A549 (cell line): ENCODE measurements at regions of chr12 and their contacts with region 1.

Region 1: DNA sequence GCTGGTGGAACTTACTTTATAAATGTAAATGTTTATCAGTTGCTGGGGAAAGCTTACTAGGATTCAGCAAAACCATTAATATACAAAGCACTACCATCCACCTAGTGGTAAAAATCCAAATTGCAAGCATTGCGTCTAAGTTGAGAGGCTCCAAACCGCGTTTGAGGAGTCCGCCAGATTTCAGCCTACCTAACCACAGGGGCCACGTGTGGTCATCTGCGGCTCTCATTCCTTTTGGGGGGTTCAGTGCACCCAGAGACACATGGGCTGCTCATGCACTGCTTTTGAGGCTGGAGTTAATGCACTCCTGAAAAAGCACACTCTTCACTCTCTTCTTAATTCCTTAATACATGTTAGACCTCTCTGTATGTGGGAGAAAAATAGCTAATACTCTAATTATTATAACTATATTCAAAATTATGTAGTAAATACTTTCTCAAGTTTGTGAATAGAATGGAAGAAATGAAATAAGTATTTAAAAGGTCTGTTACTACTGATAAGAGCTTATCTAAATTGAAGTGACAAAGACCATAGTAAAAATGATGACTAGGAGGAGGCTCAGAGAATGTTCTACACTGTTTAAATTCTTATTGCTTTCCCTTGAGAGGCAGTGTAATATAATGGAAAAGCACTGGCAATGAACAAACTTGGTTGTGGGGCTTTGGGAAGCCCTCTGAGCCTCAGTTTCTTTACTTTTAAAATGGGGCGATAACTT is 41.4 kb upstream of the MANSC4 start:
- DNase-seq: peak; percentile 79 to 80
- ATAC-seq: peak; percentile 76 to 92
- H3K4me3 ChIP-seq: no peak overlapping the region
- H3K27ac ChIP-seq: no peak overlapping the region
- H3K4me1 ChIP-seq: 0 out of 3 replicates have a peak, but pooled peaks cover 5% of the 10 kb centered on the region
- CTCF ChIP-seq: peak; percentile 68
- EP300 ChIP-seq: no peak
- POLR2A ChIP-seq: no peak
- RAD21 ChIP-seq: peak; percentile 67

Region 2: DNA sequence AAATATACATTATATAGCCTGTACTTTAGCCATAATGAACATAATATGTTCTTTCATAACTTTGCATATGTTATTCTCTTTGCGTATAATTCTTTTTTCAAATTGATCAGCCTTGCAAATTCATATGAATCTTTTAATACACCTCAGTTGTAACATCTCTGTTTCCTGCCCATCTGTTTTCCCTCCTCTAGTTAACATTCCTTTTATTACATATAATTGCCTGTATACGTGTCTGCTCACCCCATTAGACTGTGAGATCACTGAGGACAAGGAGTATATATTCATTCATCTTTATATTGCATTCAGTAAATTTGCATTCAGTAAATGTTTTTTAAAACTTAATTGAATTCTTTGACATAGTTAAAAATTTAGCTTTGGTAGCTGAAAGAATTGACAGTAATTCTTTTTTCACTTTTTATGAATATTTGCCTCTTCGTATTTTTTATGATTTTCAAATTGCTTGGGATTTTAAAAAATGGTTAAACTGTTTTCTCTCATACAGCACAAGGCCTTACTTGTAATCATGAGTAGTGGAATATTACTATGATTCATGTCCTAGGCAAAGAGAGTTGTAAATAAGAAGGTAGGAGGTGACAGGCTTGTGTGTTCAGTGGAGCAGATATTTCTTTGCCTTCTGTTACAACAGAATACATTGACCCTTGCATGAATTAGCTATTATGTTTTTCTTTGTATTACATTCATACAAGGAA is 74.2 kb before region 1 on chr12:
- CTCF ChIA-PET with region 1: interaction called, 22 read pairs
- POLR2A ChIA-PET with region 1: no interaction called
- DNase-seq: peak; percentile 31 to 53
- ATAC-seq: peak; percentile 76 to 90
- H3K4me3 ChIP-seq: no peak overlapping the region
- H3K27ac ChIP-seq: peak overlapping the region; percentile 81 to 82
- H3K4me1 ChIP-seq: peaks cover 56% of the 10 kb centered on the region
- CTCF ChIP-seq: no peak
- EP300 ChIP-seq: no peak
- POLR2A ChIP-seq: no peak
- RAD21 ChIP-seq: no peak

Region 3: GRCh38 chr12:27779920-27780611 is 41.4 kb before region 1 on chr12 and contains the starts of genes KLHL42 and MANSC4:
- CTCF ChIA-PET with region 1: interaction called, 3 read pairs
- POLR2A ChIA-PET with region 1: interaction called, 15 read pairs
- DNase-seq: peak; percentile 43 to 75
- ATAC-seq: peak; percentile 87 to 90
- H3K4me3 ChIP-seq: peak within 1 kb of the TSS; percentile 66
- H3K27ac ChIP-seq: peak within 1 kb of the TSS; percentile 92 to 97
- H3K4me1 ChIP-seq: peaks cover 25% of the 10 kb centered on the region
- CTCF ChIP-seq: 0 out of 3 replicates have a peak, but pooled peaks have one; percentile 7
- EP300 ChIP-seq: no peak
- POLR2A ChIP-seq: peak; percentile 55
- RAD21 ChIP-seq: no peak
- polyA plus RNA-seq, gene KLHL42: 24.0 and 29.1 TPM in 2 replicates
- polyA plus RNA-seq, gene MANSC4: 0.09 and 0.21 TPM in 2 replicates

Region 4: GRCh38 chr12:27794818-27795584 is 26.4 kb before region 1 on chr12:
- CTCF ChIA-PET with region 1: interaction called, 31 read pairs
- POLR2A ChIA-PET with region 1: no interaction called
- DNase-seq: no peak
- ATAC-seq: no peak
- H3K4me3 ChIP-seq: no peak overlapping the region
- H3K27ac ChIP-seq: no peak overlapping the region
- H3K4me1 ChIP-seq: no peaks in the 10 kb centered on the region
- CTCF ChIP-seq: no peak
- EP300 ChIP-seq: no peak
- POLR2A ChIP-seq: no peak
- RAD21 ChIP-seq: no peak

Region 5: GRCh38 chr12:27810756-27811155 is 10.7 kb before region 1 on chr12:
- CTCF ChIA-PET with region 1: interaction called, 26 read pairs
- POLR2A ChIA-PET with region 1: no interaction called
- DNase-seq: no peak
- ATAC-seq: no peak; a peak in 2 of 6 replicates
- H3K4me3 ChIP-seq: no peak overlapping the region
- H3K27ac ChIP-seq: no peak overlapping the region
- H3K4me1 ChIP-seq: peaks cover 11% of the 10 kb centered on the region; the same call in 2 of the 3 replicates
- CTCF ChIP-seq: no peak
- EP300 ChIP-seq: no peak
- POLR2A ChIP-seq: no peak
- RAD21 ChIP-seq: no peak

Region 6: GRCh38 chr12:27840244-27840999 is 19.0 kb after region 1 on chr12:
- CTCF ChIA-PET with region 1: interaction called, 27 read pairs
- POLR2A ChIA-PET with region 1: no interaction called
- DNase-seq: no peak
- ATAC-seq: no peak
- H3K4me3 ChIP-seq: no peak overlapping the region
- H3K27ac ChIP-seq: 0 out of 6 replicates have a peak overlapping the region, but pooled peaks of 1 of the 2 experiments have one; percentile 3
- H3K4me1 ChIP-seq: peaks cover 10% of the 10 kb centered on the region; the same call in 1 of the 3 replicates
- CTCF ChIP-seq: peak; percentile 43; the same call in 2 of the 3 replicates
- EP300 ChIP-seq: no peak
- POLR2A ChIP-seq: no peak
- RAD21 ChIP-seq: peak; percentile 22 to 29; a peak in 1 of 5 replicates